ENCODE measurements at regions of chr3 and their contacts with region 1.

Region 1: GRCh38 chr3:14461748-14462324 is 59.4 kb downstream of the SLC6A6 start:
- DNase-seq: peak; percentile 65
- H3K4me3 ChIP-seq: no peak overlapping the region
- H3K27ac ChIP-seq: no peak overlapping the region
- H3K27me3 ChIP-seq: no peaks in the 10 kb centered on the region
- CTCF ChIP-seq: peak; percentile 94

Region 2: GRCh38 chr3:14261229-14261628 is 200.6 kb before region 1 on chr3:
- in situ Hi-C with region 1: loop called (anchors 25 kb)
- DNase-seq: peak; percentile 66
- H3K4me3 ChIP-seq: no peak overlapping the region
- H3K27ac ChIP-seq: no peak overlapping the region
- H3K27me3 ChIP-seq: peaks cover 18% of the 10 kb centered on the region
- CTCF ChIP-seq: peak; percentile 98